CD8-positive, alpha-beta T cell (primary cell): ENCODE measurements at regions of chr1 and their contacts with region 1.

Region 1: GRCh38 chr1:228109073-228109961 is at the start of gene MRPL55:
- DNase-seq: peak; percentile 97 to 100 (median 98)
- ATAC-seq: peak; percentile 97
- H3K4me3 ChIP-seq: peak within 1 kb of the TSS; percentile 93 to 98
- H3K4me3 Mint-ChIP-seq: peak within 1 kb of the TSS; percentile 95
- H3K27ac ChIP-seq: peak within 1 kb of the TSS; percentile 90 to 94
- H3K27ac Mint-ChIP-seq: peak within 1 kb of the TSS; percentile 96
- H3K4me1 ChIP-seq: peaks cover 21% of the 10 kb centered on the region
- H3K4me1 Mint-ChIP-seq: peaks cover 26% of the 10 kb centered on the region
- H3K27me3 ChIP-seq: no peaks in the 10 kb centered on the region
- H3K27me3 Mint-ChIP-seq: no peaks in the 10 kb centered on the region
- CTCF ChIP-seq: no peak
- total RNA-seq, gene MRPL55: 90.2 to 90.7 TPM

Region 2: GRCh38 chr1:228275739-228276421 is 166.6 kb after region 1 on chr1:
- CTCF ChIA-PET with region 1: no interaction called
- POLR2A ChIA-PET with region 1: no interaction called
- intact Hi-C with region 1: loop called in 1 of 2 experiments (anchors 1 kb)
- DNase-seq: peak; percentile 74 to 95 (median 92)
- ATAC-seq: peak; percentile 96
- H3K4me3 ChIP-seq: peak overlapping the region; percentile 75 to 81
- H3K4me3 Mint-ChIP-seq: peak overlapping the region; percentile 80
- H3K27ac ChIP-seq: peak overlapping the region; percentile 31 to 39
- H3K27ac Mint-ChIP-seq: peak overlapping the region; percentile 18
- H3K4me1 ChIP-seq: peaks cover 6% of the 10 kb centered on the region
- H3K4me1 Mint-ChIP-seq: peaks cover 12% of the 10 kb centered on the region
- H3K27me3 ChIP-seq: no peaks in the 10 kb centered on the region
- H3K27me3 Mint-ChIP-seq: no peaks in the 10 kb centered on the region
- CTCF ChIP-seq: no peak